WTC11 (cell line): ENCODE measurements at regions of chr1 and their contacts with region 1.

Region 1: GRCh38 chr1:41282679-41283317 is 40.7 kb upstream of the SCMH1 start:
- DNase-seq: peak; percentile 73
- ATAC-seq: peak; percentile 88
- H3K4me3 Mint-ChIP-seq: no peak overlapping the region
- H3K27ac Mint-ChIP-seq: no peak overlapping the region
- H3K4me1 Mint-ChIP-seq: peaks cover 15% of the 10 kb centered on the region
- H3K27me3 Mint-ChIP-seq: peaks cover 22% of the 10 kb centered on the region
- CTCF ChIP-seq: peak; percentile 63; the same call in 1 of the 2 replicates

Region 2: DNA sequence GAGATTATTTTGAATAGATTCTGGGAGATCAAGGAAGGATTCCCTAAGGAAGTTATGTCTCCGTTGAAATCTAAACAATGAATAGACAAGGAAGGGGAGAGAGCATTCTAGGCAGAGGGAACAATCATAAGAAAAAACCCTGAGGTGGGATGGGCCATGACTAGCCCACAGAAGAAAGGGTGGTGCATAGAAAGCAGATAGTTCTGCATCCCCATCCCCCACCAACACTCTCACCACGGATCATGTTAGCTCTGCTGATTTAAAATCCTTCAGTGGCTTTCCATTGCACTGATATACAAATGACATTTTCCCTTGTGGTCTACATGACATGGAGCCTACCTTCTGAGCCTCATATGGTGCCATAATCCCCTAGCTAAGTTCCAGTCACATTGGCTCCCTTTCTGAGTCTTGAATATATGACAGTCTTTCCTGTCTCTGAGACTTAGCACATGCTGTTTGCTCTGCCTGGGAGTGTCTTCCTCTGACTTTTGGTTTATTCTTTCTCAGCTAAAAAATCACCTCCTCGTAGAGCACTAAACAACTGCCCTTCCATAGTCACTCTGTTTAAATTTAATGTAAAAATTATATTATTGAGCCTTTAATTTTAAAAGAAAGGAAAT is 55.9 kb before region 1 on chr1:
- CTCF ChIA-PET with region 1: no interaction called
- POLR2A ChIA-PET with region 1: no interaction called
- DNase-seq: no peak
- ATAC-seq: no peak
- H3K4me3 Mint-ChIP-seq: no peak overlapping the region
- H3K27ac Mint-ChIP-seq: no peak overlapping the region
- H3K4me1 Mint-ChIP-seq: peaks cover 5% of the 10 kb centered on the region; the same call in 1 of the 2 replicates
- H3K27me3 Mint-ChIP-seq: no peaks in the 10 kb centered on the region
- CTCF ChIP-seq: no peak

Region 3: DNA sequence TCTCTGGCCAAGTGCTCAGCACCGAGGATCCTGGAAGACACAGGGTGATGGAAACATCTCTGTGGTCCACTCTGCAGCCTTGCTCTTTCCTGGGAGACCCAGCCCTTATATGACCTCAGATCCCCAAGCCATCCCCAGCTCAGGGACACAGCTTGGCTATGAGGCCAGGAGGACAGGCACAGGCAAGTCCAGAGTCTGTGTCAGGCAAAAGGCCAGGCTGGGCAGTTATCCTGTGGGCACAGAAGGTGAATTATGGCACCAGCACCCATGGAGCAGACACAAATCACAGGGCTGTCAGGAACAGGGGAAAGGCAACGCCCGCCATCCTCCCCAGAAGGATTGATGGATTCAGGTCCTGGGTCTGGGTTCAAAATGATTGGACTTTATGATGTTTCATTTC is 11.4 kb after region 1 on chr1:
- CTCF ChIA-PET with region 1: interaction called, 20 read pairs
- POLR2A ChIA-PET with region 1: no interaction called
- DNase-seq: no peak
- ATAC-seq: no peak
- H3K4me3 Mint-ChIP-seq: no peak overlapping the region
- H3K27ac Mint-ChIP-seq: no peak overlapping the region
- H3K4me1 Mint-ChIP-seq: no peaks in the 10 kb centered on the region
- H3K27me3 Mint-ChIP-seq: peaks cover 10% of the 10 kb centered on the region; the same call in 1 of the 2 replicates
- CTCF ChIP-seq: no peak

Region 4: GRCh38 chr1:41322835-41323627 is 40.2 kb after region 1 on chr1:
- CTCF ChIA-PET with region 1: interaction called, 21 read pairs
- POLR2A ChIA-PET with region 1: no interaction called
- DNase-seq: peak; percentile 75
- ATAC-seq: peak; percentile 95
- H3K4me3 Mint-ChIP-seq: no peak overlapping the region
- H3K27ac Mint-ChIP-seq: no peak overlapping the region
- H3K4me1 Mint-ChIP-seq: peaks cover 11% of the 10 kb centered on the region
- H3K27me3 Mint-ChIP-seq: no peaks in the 10 kb centered on the region
- CTCF ChIP-seq: peak; percentile 49

Region 5: GRCh38 chr1:41341772-41342562 is 59.2 kb after region 1 on chr1:
- CTCF ChIA-PET with region 1: interaction called, 10 read pairs
- POLR2A ChIA-PET with region 1: no interaction called
- DNase-seq: no peak
- ATAC-seq: peak; percentile 40; the same call in 1 of the 2 replicates
- H3K4me3 Mint-ChIP-seq: no peak overlapping the region
- H3K27ac Mint-ChIP-seq: no peak overlapping the region
- H3K4me1 Mint-ChIP-seq: peaks cover 6% of the 10 kb centered on the region
- H3K27me3 Mint-ChIP-seq: peaks cover 12% of the 10 kb centered on the region
- CTCF ChIP-seq: no peak

Region 6: DNA sequence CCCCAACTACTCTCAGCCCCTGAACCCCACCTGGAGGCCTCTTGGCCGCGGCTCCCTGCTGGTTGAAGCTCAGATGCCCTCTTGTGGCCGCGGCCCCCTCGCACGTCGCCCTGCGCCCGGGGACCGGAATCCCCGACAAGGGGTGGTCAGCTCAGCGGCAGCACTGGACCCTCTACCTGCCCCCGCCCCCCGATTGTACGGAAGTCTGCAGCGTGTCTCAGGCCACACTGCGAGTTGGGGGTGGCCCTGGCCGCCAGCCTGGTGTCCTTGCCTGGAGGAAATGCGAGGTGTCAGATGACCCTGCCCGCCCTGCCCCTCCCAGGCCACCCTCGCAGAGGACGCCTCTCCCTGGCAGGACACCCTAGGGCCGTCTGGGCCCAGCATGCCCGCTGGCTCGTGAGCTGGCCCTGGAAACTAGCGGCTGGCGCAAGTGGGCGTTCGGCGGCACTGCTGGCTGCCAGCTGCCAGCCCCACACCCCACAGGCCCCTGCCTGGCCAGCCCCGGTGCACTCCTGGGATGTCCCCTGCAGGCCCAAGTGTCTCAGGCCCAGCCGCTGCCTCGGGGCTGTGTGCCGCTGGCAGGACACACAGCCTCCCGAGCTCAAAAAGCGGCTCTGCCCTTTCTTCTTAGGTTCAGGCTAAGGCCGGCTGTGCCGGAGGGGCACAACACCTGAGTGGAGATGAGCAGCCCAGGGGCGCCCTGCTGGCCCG is 140.9 kb after region 1 on chr1:
- CTCF ChIA-PET with region 1: interaction called, 27 read pairs
- POLR2A ChIA-PET with region 1: no interaction called
- DNase-seq: peak; percentile 66
- ATAC-seq: peak; percentile 52
- H3K4me3 Mint-ChIP-seq: no peak overlapping the region
- H3K27ac Mint-ChIP-seq: no peak overlapping the region
- H3K4me1 Mint-ChIP-seq: peaks cover 5% of the 10 kb centered on the region
- H3K27me3 Mint-ChIP-seq: no peaks in the 10 kb centered on the region
- CTCF ChIP-seq: no peak

Region 7: GRCh38 chr1:41516168-41517061 is 233.6 kb after region 1 on chr1:
- CTCF ChIA-PET with region 1: interaction called, 12 read pairs
- POLR2A ChIA-PET with region 1: no interaction called
- DNase-seq: peak; percentile 90
- ATAC-seq: peak; percentile 85
- H3K4me3 Mint-ChIP-seq: peak overlapping the region; percentile 63
- H3K27ac Mint-ChIP-seq: no peak overlapping the region
- H3K4me1 Mint-ChIP-seq: peaks cover 12% of the 10 kb centered on the region
- H3K27me3 Mint-ChIP-seq: peaks cover 15% of the 10 kb centered on the region
- CTCF ChIP-seq: peak; percentile 60; the same call in 1 of the 2 replicates